ENCODE measurements at regions of chr7 and their contacts with region 1.

Region 1: DNA sequence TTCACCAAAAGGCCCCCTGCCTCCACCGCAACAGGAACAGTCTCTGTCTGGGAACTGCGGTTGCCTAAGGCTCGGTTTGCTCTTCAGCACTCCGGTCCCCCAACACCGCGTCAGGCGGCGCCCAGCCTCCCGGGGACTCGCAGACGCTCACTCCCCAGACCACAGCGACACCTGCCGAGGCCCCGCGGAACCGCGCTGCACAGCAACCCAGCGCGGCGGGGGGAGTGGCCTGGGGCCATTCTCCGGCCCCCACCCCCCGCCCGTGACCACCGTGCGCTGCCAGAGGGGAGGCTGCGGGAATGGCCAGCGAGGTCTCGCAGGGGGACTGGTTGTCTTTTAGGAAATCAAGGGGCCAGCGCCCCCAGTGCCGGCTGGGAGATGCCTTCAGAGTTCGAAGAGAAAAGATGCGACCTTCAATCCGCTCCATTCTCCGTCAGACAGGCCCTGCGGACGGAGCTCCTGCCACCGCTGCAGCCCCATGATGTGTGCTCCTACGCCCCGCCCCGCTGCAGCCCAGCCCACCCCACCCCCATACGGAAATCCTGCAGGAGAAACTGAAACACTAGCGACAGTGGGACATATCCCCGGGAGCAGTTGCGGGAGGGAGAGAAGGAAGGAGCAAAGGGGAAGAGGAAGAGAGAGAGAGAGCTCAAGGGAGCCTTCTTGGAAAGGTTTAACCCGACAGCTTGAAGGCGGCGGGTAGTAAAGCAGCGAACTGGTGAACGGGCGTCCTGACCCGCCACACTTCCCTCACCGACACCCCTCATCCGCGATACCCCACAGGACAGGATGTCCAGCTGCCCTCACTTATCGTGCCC is 137.4 kb upstream of the CDCA7L start:
- DNase-seq: peak; percentile 65
- ATAC-seq: peak; percentile 99
- H3K4me3 ChIP-seq: peak overlapping the region; percentile 70
- H3K27ac ChIP-seq: peak overlapping the region; percentile 1
- H3K4me1 ChIP-seq: no peaks in the 10 kb centered on the region
- H3K27me3 ChIP-seq: peaks cover 2% of the 10 kb centered on the region; the same call in 1 of the 2 replicates
- CTCF ChIP-seq: peak; percentile 89
- POLR2A ChIP-seq: no peak
- RAD21 ChIP-seq: peak; percentile 76

Region 2: DNA sequence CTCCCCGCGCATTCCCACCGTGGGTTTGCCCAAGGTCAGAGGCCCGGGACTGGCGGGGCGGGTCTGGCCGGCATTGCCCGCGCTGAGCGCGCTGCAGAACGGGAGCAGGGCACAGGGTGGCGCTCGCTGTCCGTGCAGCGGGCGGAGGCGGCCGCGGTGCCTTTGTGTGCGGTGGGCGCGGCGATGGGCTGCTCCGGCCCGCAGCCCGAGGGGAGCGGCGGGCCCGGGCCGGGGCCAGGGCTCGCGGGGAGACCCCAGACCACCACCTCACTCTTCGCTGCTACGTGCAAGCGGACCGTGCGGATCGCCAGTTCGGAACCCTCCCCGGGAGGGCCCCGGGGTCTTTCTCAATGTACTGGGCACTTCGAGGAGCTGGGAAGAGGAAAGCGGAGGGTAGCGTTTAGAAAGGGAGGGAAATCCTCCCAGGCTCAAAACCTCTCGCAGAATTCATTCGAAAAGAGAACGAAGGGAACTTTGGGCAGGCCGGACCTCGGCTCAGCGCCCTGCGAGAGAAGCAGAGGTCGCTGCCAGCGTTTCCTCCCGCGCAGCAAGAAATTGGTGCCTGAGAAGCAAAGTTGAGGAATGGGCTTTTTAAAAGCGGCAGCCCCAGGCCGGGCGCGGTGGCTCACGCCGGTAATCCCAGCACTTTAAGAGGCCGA is 1304.9 kb before region 1 on chr7:
- CTCF ChIA-PET with region 1: no interaction called
- POLR2A ChIA-PET with region 1: no interaction called
- dilution Hi-C with region 1: no loop called
- in situ Hi-C with region 1: no loop called
- intact Hi-C with region 1: loop called (anchors 5 kb)
- DNase-seq: no peak
- ATAC-seq: peak; percentile 98
- H3K4me3 ChIP-seq: peak overlapping the region; percentile 20
- H3K27ac ChIP-seq: no peak overlapping the region
- H3K4me1 ChIP-seq: no peaks in the 10 kb centered on the region
- H3K27me3 ChIP-seq: peaks cover 45% of the 10 kb centered on the region
- CTCF ChIP-seq: peak; percentile 52
- POLR2A ChIP-seq: no peak
- RAD21 ChIP-seq: peak; percentile 64

Region 3: DNA sequence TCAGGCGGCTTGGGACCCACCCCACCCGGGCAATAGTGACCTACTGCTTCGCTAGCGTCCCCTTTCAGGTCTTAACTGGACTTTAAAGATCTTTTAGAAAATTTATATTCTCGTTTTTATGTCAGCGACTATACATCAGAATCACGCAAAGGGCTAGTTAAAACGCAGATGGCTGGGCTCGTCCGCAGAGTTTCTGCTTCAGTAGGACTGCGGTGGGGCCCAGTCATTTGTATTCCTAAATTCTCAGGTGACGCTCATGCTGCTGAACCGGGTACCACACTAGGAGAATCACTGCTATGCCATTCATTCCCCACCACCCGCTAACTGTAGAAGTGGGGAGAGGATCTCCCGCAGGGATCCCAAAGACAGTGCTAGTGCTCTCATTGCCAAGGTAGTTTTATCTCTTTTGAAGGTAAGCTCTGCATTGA is 1284.4 kb before region 1 on chr7:
- CTCF ChIA-PET with region 1: no interaction called
- POLR2A ChIA-PET with region 1: no interaction called
- dilution Hi-C with region 1: no loop called
- in situ Hi-C with region 1: no loop called
- intact Hi-C with region 1: no loop called
- DNase-seq: no peak
- ATAC-seq: no peak
- H3K4me3 ChIP-seq: no peak overlapping the region
- H3K27ac ChIP-seq: no peak overlapping the region
- H3K4me1 ChIP-seq: peaks cover 4% of the 10 kb centered on the region; the same call in 1 of the 2 replicates
- H3K27me3 ChIP-seq: peaks cover 40% of the 10 kb centered on the region
- CTCF ChIP-seq: no peak
- POLR2A ChIP-seq: no peak
- RAD21 ChIP-seq: no peak

Region 4: DNA sequence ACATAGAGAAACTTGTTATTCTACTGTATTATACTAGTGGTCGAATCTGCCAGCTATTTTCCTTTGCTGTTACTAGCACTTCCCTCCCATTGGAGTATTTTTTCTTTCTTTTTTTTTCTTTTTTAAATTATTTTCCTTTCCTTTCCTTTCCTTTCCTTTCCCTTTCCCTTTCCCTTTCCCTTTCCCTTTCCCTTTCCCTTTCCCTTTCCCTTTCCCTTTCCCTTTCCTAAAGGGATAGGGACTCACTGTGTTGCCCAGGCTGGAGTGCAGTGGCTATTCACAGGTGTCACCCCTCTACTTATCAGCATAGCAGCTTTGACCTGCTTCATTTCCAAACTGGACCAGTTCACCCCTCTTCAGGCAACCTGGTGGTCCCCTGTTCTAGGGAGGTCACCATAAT is 867.8 kb before region 1 on chr7:
- CTCF ChIA-PET with region 1: no interaction called
- POLR2A ChIA-PET with region 1: no interaction called
- dilution Hi-C with region 1: no loop called
- in situ Hi-C with region 1: no loop called
- intact Hi-C with region 1: no loop called
- DNase-seq: no peak
- ATAC-seq: no peak
- H3K4me3 ChIP-seq: no peak overlapping the region
- H3K27ac ChIP-seq: no peak overlapping the region
- H3K4me1 ChIP-seq: no peaks in the 10 kb centered on the region
- H3K27me3 ChIP-seq: no peaks in the 10 kb centered on the region
- CTCF ChIP-seq: no peak
- POLR2A ChIP-seq: no peak
- RAD21 ChIP-seq: no peak

Region 5: DNA sequence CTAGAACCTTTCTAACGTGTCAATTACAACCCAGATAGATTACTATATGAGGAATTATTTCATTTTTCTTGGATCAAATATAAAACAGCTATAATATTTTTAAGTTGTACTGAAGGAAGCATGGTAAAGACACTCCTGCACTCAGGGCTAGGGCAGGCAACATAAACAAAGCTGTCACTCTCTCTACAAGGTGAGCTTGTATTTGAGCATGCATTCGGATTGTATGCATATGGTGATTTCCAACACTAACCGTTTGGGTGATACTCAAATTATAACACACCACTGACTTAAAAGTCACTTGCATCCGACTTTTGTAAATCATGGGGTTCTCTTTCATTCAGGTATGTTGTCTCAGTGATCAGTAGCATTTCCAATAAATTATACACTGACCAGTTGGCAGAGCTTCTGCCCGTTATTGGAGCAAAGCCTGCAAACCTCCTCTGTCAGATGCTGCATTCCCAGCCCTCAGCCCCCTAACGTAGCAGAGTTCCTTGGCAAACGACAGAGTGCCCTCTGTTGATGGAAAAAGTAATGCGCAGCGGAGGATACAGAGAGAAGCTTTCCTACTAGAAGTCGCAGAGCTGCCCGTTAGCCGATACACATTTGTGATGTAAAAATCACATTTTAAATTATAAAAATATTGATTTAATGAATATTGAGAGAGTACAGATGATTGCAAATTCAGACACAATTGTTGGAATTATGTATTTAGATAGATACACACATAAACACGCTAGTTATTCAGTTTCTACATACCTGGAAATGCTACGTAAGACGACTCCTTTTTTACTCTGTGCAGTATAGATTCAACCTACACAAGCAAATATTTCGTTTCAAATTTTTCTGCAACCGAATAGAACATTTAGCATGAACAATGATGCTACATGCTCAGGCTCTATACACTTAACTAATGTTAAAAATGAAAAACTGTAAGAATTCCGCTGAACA is 829.1 kb before region 1 on chr7:
- CTCF ChIA-PET with region 1: no interaction called
- POLR2A ChIA-PET with region 1: no interaction called
- dilution Hi-C with region 1: no loop called
- in situ Hi-C with region 1: no loop called
- intact Hi-C with region 1: loop called (anchors 2 kb)
- DNase-seq: peak; percentile 26
- ATAC-seq: peak; percentile 69; the same call in 1 of the 2 replicates
- H3K4me3 ChIP-seq: no peak overlapping the region
- H3K27ac ChIP-seq: no peak overlapping the region
- H3K4me1 ChIP-seq: no peaks in the 10 kb centered on the region
- H3K27me3 ChIP-seq: no peaks in the 10 kb centered on the region
- CTCF ChIP-seq: peak; percentile 51
- POLR2A ChIP-seq: no peak
- RAD21 ChIP-seq: peak; percentile 34; the same call in 1 of the 2 replicates

Region 6: DNA sequence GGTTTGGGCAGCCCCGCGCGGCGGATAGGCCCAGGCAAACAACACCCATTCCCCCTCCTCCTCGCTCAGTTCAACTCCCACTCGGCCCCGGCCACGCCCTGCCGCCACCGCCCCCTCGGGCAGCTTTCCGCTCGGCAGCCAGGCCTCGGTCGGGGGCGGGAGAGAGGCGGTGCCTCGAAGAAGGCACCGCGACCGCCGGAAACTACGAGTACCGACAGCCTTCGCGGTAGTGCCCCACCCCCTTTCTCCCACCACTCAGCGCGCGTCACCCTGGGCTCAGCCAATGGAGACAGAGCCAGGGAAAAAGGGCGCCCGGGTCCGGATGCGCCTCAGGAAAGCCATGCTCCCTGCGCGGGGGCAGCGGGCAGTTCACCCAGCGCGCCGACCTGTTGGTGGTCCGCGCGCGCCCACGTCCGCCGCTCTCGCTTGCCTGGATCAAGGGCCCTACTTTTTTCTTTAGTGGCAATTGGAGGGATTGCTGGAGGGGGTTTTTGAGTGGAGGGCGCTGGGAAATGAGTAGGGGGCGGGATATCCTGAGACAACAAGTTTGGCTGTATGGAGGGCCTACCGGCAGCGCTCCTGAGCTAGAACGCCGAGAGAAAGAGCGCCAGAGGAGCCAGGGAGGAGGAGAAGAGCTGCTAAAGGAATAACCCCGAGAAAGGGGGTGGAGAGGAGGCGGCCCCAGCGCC is 655.8 kb before region 1 on chr7:
- CTCF ChIA-PET with region 1: no interaction called
- POLR2A ChIA-PET with region 1: no interaction called
- dilution Hi-C with region 1: no loop called
- in situ Hi-C with region 1: no loop called
- intact Hi-C with region 1: loop called (anchors 1 kb)
- DNase-seq: peak; percentile 97
- ATAC-seq: peak; percentile 82
- H3K4me3 ChIP-seq: peak overlapping the region; percentile 61
- H3K27ac ChIP-seq: peak overlapping the region; percentile 22; the same call in 1 of the 2 replicates
- H3K4me1 ChIP-seq: peaks cover 4% of the 10 kb centered on the region; the same call in 1 of the 2 replicates
- H3K27me3 ChIP-seq: no peaks in the 10 kb centered on the region
- CTCF ChIP-seq: no peak
- POLR2A ChIP-seq: peak; percentile 76
- RAD21 ChIP-seq: no peak

Region 7: DNA sequence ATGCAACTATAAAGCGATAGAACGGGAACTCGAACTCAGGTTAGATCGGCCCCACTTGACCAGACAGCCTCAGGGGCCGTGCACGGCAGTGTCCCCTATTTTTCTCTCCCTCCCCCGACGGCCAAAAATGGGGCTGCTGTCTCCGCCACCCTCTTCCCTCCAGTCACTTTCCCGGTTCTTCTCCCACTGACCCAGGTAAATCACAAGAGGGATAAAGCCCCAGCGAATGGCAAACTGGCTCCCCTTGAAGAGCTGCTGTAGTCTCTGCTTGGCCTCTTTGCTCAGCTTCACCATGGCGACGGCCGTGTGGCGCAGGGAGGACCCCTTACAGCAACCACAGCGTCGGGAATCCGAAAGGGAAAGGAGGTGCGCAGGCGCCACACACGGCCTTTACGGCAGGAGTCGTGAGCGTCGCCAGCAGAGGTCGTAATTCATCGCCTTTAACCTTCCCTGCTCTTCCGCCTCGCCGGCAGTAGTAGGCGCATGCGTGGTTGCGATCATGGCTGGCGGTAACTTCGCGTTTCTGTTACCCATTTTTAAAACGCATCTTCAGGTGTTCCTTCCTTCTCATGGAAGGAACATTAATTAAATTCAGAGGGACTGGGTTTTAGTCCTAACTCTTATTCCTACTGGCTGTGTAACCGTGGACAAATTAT is 739.5 kb after region 1 on chr7 and contains the start of gene TOMM7:
- CTCF ChIA-PET with region 1: no interaction called
- POLR2A ChIA-PET with region 1: interaction called, 19 read pairs
- dilution Hi-C with region 1: no loop called
- in situ Hi-C with region 1: no loop called
- intact Hi-C with region 1: no loop called
- DNase-seq: peak; percentile 97
- ATAC-seq: peak; percentile 93
- H3K4me3 ChIP-seq: peak within 1 kb of the TSS; percentile 82
- H3K27ac ChIP-seq: peak within 1 kb of the TSS; percentile 88
- H3K4me1 ChIP-seq: peaks cover 5% of the 10 kb centered on the region
- H3K27me3 ChIP-seq: no peaks in the 10 kb centered on the region
- CTCF ChIP-seq: peak; percentile 53
- POLR2A ChIP-seq: peak; percentile 86
- RAD21 ChIP-seq: peak; percentile 52
- total RNA-seq, gene TOMM7: 67.2 and 125 TPM in 2 replicates

Measured in IMR-90 (cell line).